ENCODE measurements at regions of chr20 and their contacts with region 1.

Region 1: GRCh38 chr20:15200147-15200565 is 862.7 kb upstream of the FLRT3 start:
- DNase-seq: no peak
- H3K4me3 ChIP-seq: no peak overlapping the region
- H3K27ac ChIP-seq: no peak overlapping the region
- H3K4me1 ChIP-seq: no peaks in the 10 kb centered on the region
- CTCF ChIP-seq: no peak

Region 2: DNA sequence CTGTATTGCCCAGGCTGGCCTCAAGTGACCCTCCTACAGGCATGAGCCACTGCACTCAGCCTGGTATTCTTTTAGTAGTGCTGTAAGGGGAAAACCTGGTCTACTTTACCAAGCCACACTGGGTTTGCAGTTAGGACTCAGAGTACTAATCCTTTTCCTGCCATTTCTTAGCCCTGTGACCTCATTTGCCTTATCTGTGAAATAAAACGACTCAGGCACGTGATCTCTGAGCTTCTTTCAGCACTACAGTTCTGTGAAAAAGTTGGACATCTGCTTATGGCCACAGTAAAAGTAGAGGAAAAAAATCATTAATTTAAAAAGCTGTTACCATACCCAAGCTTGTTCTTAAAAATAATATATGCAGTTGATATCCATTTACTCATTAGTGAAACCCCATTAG is 365.6 kb after region 1 on chr20:
- CTCF ChIA-PET with region 1: no interaction called
- POLR2A ChIA-PET with region 1: interaction called, 10 read pairs
- intact Hi-C with region 1: no loop called
- DNase-seq: no peak
- H3K4me3 ChIP-seq: no peak overlapping the region
- H3K27ac ChIP-seq: no peak overlapping the region
- H3K4me1 ChIP-seq: no peaks in the 10 kb centered on the region
- CTCF ChIP-seq: no peak

Measured in OCI-LY7 (cell line).